Activated CD4-positive, alpha-beta memory T cell treated with anti-CD3 and anti-CD28 coated beads for 36 hours (primary cell): ENCODE measurements at regions of chr17 and their contacts with region 1.

Region 1: GRCh38 chr17:21119247-21119918 is 7.4 kb upstream of the DHRS7B start:
- DNase-seq: peak; percentile 80
- H3K4me3 Mint-ChIP-seq: no peak overlapping the region
- H3K27ac Mint-ChIP-seq: peak overlapping the region; percentile 19
- H3K4me1 Mint-ChIP-seq: peaks cover 9% of the 10 kb centered on the region
- H3K27me3 Mint-ChIP-seq: peaks cover 1% of the 10 kb centered on the region

Region 2: GRCh38 chr17:21072745-21073197 is 46.6 kb before region 1 on chr17:
- CTCF ChIA-PET with region 1: no interaction called
- POLR2A ChIA-PET with region 1: no interaction called
- intact Hi-C with region 1: no loop called
- DNase-seq: no peak
- H3K4me3 Mint-ChIP-seq: no peak overlapping the region
- H3K27ac Mint-ChIP-seq: no peak overlapping the region
- H3K4me1 Mint-ChIP-seq: no peaks in the 10 kb centered on the region
- H3K27me3 Mint-ChIP-seq: no peaks in the 10 kb centered on the region

Region 3: DNA sequence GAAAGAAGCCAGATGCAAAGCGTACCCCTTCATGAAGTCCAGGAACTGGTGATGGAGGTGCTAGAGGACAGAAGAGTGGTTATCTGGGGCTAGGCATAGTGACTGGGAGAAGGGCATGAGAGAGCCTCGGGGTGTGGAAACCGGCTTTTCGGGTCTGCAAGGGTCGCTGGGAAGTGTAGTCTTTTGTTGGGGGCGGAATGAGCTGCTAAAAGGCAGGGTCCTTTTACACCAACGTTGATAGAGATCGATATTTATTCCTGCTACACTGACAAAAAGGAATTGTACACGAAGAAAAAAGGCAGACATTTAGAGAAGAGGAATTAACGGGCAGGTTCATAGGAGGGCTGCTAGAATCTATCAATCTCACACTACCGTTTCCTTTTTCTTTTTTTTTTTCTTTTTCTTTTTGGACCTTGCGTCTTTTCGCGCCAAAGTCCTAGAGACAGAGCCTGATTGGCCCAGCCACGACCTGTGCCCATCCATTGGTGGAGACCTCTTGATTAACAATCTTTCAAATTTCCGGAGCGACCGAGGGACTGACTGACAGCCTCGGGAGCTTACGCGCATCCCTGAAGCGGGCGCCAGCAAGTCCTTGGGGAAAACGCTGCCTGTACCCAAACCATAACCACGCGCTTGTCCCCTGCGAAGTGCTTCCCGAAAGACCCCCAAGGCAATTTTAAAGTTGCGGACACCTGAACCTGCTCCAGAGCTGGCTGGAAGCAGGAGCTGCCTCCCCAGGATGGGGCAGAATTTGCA is 20.3 kb before region 1 on chr17:
- CTCF ChIA-PET with region 1: interaction called, 15 read pairs
- POLR2A ChIA-PET with region 1: no interaction called
- intact Hi-C with region 1: no loop called
- DNase-seq: peak; percentile 87
- H3K4me3 Mint-ChIP-seq: peak overlapping the region; percentile 97
- H3K27ac Mint-ChIP-seq: peak overlapping the region; percentile 88
- H3K4me1 Mint-ChIP-seq: peaks cover 4% of the 10 kb centered on the region
- H3K27me3 Mint-ChIP-seq: no peaks in the 10 kb centered on the region

Region 4: DNA sequence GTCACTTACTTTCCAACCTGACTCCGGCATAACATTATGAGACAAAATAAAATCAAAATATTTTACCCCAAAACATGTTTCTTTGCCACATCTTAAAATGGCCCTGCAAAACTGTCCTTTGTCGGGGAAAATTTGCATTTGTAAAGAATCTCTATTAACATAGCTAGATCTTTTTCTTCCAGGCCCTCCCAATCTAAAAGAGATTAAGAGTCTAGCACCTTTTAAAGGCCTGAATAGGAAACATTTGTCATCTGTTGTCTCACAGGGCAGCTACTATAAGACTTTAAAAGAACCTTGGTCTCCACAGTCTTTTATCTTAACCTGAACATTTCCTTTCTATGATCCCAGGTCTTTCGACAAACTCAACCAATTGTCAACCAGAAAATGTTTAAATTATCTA is 10.7 kb before region 1 on chr17:
- CTCF ChIA-PET with region 1: interaction called, 16 read pairs
- POLR2A ChIA-PET with region 1: interaction called, 3 read pairs
- intact Hi-C with region 1: no loop called
- DNase-seq: no peak
- H3K4me3 Mint-ChIP-seq: no peak overlapping the region
- H3K27ac Mint-ChIP-seq: no peak overlapping the region
- H3K4me1 Mint-ChIP-seq: no peaks in the 10 kb centered on the region
- H3K27me3 Mint-ChIP-seq: no peaks in the 10 kb centered on the region

Region 5: GRCh38 chr17:21132428-21132827 is 13.0 kb after region 1 on chr17:
- CTCF ChIA-PET with region 1: interaction called, 21 read pairs
- POLR2A ChIA-PET with region 1: interaction called, 3 read pairs
- intact Hi-C with region 1: no loop called
- DNase-seq: no peak
- H3K4me3 Mint-ChIP-seq: no peak overlapping the region
- H3K27ac Mint-ChIP-seq: no peak overlapping the region
- H3K4me1 Mint-ChIP-seq: peaks cover 12% of the 10 kb centered on the region
- H3K27me3 Mint-ChIP-seq: no peaks in the 10 kb centered on the region

Region 6: GRCh38 chr17:21275579-21276263 is 156.3 kb after region 1 on chr17:
- CTCF ChIA-PET with region 1: interaction called, 30 read pairs
- POLR2A ChIA-PET with region 1: no interaction called
- intact Hi-C with region 1: no loop called
- DNase-seq: peak; percentile 96
- H3K4me3 Mint-ChIP-seq: peak overlapping the region; percentile 90
- H3K27ac Mint-ChIP-seq: peak overlapping the region; percentile 82
- H3K4me1 Mint-ChIP-seq: peaks cover 45% of the 10 kb centered on the region
- H3K27me3 Mint-ChIP-seq: no peaks in the 10 kb centered on the region

Region 7: GRCh38 chr17:21511363-21512198 is 392.2 kb after region 1 on chr17:
- CTCF ChIA-PET with region 1: interaction called, 36 read pairs
- POLR2A ChIA-PET with region 1: no interaction called
- intact Hi-C with region 1: loop called (anchors 1 kb)
- DNase-seq: peak; percentile 78
- H3K4me3 Mint-ChIP-seq: peak overlapping the region; percentile 61
- H3K27ac Mint-ChIP-seq: no peak overlapping the region
- H3K4me1 Mint-ChIP-seq: peaks cover 16% of the 10 kb centered on the region
- H3K27me3 Mint-ChIP-seq: peaks cover 23% of the 10 kb centered on the region